Right ventricle myocardium inferior (tissue), 1 donor: ENCODE measurements at regions of chr21 and their contacts with region 1.

Region 1: DNA sequence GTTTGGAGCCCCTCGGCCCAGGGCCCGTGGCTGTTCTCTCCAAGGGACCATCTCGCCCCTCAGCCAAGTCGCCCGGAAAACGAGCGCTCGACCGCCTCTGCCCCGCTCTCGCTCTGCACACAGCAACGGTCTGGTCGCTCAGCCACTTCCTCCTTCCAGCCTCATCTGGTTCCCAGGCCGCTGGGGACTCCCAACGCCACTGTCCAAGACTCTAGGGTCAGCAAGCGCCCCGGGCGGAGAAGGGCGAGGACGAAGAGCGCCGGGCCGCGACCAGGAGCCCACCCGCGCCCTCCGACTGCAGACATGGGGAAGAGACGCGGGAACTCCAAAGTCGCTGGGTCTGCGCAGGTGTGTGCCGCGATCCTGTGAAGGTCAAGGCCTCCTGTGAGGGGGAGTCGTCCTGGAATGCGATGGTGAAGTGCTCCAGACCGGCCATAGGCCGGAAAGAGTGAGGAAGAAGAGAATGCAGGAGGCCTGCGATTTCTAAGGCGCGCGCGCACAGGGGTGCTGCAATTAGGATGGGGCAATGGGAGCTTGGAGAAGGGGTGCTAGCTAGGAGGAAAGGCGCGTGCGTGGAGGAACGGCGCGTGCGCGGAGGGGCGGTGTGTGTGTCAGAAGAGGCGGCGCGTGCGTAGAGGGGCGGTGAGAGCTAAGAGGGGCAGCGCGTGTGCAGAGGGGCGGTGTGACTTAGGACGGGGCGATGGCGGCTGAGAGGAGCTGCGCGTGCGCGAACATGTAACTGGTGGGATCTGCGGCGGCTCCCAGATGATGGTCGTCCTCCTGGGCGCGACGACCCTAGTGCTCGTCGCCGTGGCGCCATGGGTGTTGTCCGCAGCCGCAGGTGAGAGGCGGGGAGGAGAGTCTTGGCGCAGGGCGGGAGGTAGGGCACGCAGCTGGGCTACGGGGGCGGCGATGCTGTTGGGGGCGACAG is at the start of gene IFNAR1:
- DNase-seq: peak; percentile 100
- ATAC-seq: peak; percentile 99
- total RNA-seq, gene IFNAR1: 31.6 TPM

Region 2: GRCh38 chr21:33266050-33266788 is 58.3 kb before region 1 on chr21 and contains the start of gene IL10RB:
- intact Hi-C with region 1: loop called (anchors 2 kb)
- DNase-seq: peak; percentile 91
- ATAC-seq: peak; percentile 96
- total RNA-seq, gene IL10RB: 8.9 TPM

Region 3: DNA sequence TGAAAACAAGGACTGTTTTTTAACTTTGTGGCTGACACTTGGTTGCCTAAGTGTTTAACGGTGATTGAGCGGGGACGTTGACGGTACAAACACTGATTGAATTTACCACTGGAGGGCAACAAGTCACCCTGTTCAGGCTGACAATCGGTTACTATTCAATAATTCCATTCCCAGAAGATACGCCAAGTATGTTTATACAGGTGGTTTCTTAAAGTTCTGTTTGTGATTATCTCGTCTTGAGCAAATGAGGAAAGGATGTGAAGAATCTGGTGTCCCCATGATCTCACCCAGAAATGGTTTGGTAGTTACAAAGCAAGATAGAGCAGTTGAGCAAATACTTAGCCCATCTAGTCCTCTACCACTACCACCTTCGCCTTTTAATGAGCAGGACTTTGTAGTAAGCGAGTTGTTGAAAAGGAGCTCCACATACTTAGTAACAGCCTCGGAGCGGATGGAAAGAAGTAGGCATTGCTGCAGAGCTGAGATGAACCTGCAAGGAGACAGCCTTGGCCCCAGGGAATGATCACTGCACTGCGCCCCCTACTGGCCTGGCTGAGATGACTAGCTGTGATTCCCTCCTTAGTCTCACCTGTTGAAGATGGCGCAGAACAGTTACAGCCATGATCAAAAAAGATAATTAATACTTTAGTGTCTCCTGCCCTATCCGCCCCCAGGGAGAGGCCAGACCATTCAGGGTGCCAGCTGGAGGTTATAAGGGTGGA is 36.5 kb after region 1 on chr21:
- intact Hi-C with region 1: loop called (anchors 2 kb)
- DNase-seq: peak; percentile 77
- ATAC-seq: peak; percentile 79

Region 4: DNA sequence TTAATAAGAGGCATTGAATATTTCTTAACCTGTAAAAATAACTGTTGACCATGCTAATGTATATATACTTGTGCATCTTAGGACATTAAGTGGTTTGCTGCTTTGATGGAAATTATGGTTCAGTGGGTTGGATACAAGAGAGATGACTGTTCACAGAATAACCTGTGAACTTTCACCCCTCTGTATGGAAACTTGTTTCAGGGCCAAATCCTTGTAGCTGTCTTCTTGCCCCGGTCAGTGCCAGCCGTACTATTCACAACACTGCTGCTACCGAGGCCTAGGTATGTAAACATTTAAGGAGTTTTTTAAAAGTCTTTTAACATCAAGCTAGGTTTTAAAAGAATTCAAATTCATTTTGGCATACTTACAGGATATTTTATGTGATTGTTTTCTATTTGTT is 247.8 kb after region 1 on chr21:
- intact Hi-C with region 1: no loop called
- DNase-seq: no peak
- ATAC-seq: no peak